Lower leg skin (tissue), 4 donors: ENCODE measurements at regions of chr2 and their contacts with region 1.

Region 1: DNA sequence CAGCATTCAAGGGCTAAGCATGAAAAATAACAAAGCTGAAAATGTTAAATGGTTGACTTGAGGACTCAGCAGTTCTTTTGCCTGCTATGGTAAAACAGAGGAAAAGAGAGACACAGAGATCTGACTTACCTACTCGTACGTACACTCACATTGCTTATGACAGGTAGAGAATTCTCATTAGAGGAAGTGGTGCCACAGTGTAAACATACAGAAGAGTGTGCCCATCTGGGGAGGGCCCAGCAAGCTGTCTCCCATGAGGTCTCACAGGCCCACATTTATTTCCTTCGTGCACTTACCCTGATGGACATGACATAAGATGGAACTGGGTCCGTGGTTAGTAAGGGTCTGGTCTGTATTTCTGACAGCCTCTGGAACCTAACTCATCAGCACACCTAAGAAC is 729.1 kb downstream of the BCL11A start:
- DNase-seq: no peak
- H3K4me3 ChIP-seq: no peak overlapping the region
- CTCF ChIP-seq: no peak
- POLR2A ChIP-seq: no peak

Region 2: GRCh38 chr2:59779571-59779970 is 44.7 kb before region 1 on chr2:
- intact Hi-C with region 1: no loop called
- DNase-seq: no peak
- H3K4me3 ChIP-seq: no peak overlapping the region
- CTCF ChIP-seq: no peak
- POLR2A ChIP-seq: no peak

Region 3: GRCh38 chr2:60725466-60725865 is 901.2 kb after region 1 on chr2:
- intact Hi-C with region 1: loop called (anchors 5 kb)
- DNase-seq: no peak
- H3K4me3 ChIP-seq: no peak overlapping the region
- CTCF ChIP-seq: no peak
- POLR2A ChIP-seq: no peak